ENCODE measurements at regions of chr19 and their contacts with region 1.

Region 1: DNA sequence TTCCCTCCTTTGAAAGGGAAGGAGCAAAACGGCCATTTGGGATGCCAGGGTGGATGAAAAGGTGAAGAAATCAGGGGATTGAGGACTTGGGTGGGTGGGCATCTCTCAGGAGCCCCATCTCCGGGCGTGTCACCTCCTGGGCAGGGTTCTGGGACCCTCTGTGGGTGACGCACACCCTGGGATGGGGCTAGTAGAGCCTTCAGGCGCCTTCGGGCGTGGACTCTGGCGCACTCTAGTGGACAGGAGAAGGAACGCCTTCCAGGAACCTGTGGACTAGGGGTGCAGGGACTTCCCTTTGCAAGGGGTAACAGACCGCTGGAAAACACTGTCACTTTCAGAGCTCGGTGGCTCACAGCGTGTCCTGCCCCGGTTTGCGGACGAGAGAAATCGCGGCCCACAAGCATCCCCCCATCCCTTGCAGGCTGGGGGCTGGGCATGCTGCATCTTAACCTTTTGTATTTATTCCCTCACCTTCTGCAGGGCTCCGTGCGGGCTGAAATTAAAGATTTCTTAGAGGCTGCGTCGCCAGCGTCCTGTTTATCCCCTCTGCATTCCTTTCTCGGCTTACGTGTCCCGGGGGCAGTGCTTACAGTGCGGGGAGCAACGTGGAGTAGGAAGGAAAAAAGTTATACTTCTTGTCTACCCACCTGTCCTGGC is 15.2 kb upstream of the S1PR4 start:
- DNase-seq: peak; percentile 74
- H3K4me3 ChIP-seq: no peak overlapping the region
- H3K27ac ChIP-seq: no peak overlapping the region
- H3K4me1 ChIP-seq: no peaks in the 10 kb centered on the region
- H3K27me3 ChIP-seq: no peaks in the 10 kb centered on the region

Region 2: GRCh38 chr19:2950286-2951124 is 212.9 kb before region 1 on chr19:
- in situ Hi-C with region 1: loop called (anchors 10 kb)
- DNase-seq: peak; percentile 100
- H3K4me3 ChIP-seq: peak overlapping the region; percentile 89
- H3K27ac ChIP-seq: peak overlapping the region; percentile 73
- H3K4me1 ChIP-seq: no peaks in the 10 kb centered on the region
- H3K27me3 ChIP-seq: no peaks in the 10 kb centered on the region

Region 3: DNA sequence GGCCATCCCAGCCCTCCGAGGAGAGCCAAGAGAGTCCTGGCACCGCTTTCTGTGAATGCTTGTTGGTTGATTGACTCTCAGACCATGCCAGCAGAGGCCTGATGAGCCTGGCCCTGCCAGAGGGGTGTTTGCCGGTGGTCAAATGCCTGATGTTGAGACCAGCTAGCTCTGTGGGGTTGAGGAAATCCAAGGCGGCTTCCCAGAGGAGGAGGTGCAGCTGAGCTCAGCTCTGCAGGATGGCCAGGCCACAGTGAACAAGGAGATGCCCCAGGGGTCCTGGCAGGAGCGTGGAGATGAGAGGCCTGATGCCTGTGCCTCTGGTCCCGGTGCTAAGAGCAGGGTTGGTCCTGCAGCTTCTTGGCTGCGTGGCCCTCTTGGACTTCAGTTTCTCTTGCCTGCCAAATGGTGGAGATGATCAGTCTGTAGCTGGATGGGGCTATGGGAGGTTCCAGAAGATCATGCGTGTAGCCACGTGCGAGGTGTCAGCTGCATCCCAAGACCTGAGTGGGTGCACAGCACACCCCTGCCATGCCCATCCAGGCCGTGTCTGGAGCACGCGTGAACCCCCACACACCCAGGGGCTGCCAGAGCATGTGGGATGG is 219.9 kb after region 1 on chr19:
- in situ Hi-C with region 1: no loop called
- DNase-seq: peak; percentile 59
- H3K4me3 ChIP-seq: no peak overlapping the region
- H3K27ac ChIP-seq: peak overlapping the region; percentile 31; the same call in 1 of the 2 replicates
- H3K4me1 ChIP-seq: peaks cover 37% of the 10 kb centered on the region
- H3K27me3 ChIP-seq: no peaks in the 10 kb centered on the region